ENCODE measurements at regions of chr12 and their contacts with region 1.

Region 1: DNA sequence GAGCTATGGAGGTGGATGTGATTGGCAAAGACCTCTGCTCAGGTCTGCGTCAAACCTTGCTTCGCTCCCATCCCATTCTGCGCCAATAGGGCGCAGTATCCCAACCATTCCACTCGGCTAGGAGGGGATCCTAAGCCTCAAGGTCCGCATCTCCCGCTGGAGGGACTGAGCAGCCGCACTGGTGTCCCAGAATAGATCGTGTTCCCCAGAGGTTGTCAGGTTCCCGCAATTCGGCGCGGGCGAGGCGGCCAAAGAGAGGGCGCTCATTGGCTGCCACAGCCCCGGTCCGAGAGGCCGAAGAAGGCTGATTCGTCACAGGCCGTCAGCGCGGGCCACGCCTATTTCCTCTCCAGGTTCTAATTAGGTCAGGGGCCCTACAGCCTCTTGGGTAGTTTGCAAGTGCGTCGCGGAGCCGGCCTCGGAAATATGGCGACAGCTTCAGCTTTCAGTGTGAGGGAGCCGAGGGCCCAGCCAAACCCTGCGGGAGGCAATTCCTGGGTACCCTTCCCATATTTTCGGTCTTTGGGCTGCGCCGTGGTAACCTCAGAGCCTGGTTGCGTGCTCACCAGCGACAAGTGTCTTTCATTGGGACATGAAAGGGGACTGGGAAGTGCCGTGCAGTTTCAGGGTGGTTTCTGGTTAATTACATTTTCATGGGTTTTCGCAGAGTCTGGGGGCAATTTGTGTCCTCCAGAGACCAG is 5.0 kb downstream of the OR10AD1 start:
- DNase-seq: peak; percentile 93 to 97 (median 96)
- H3K4me3 ChIP-seq: peak overlapping the region; percentile 81
- H3K27ac ChIP-seq: peak overlapping the region; percentile 94 to 98
- H3K4me1 ChIP-seq: peaks cover 6% of the 10 kb centered on the region
- H3K27me3 ChIP-seq: no peaks in the 10 kb centered on the region
- CTCF ChIP-seq: peak in 2 of 3 donors; percentile 6 to 27
- EP300 ChIP-seq: peak; percentile 47
- POLR2A ChIP-seq: peak; percentile 91

Region 2: DNA sequence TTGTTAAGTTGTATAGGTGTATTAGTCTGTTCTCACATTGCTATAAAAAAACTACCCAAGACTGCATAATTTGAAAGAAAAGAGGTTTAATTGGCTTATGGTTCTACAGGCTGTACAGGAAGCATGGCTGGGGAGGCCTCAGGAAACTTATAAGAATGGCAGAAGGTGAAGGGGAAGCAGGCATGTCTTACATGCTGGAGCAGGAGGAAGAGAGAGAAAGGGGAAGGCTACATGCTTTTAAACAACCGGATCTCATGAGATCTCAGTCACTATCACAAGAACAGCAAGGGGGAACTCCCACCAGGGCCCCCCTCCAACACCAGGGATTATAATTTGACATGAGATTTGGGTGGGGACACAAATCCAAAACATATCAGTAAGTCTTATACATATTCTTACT is 65.5 kb after region 1 on chr12:
- intact Hi-C with region 1: no loop called
- DNase-seq: no peak
- H3K4me3 ChIP-seq: no peak overlapping the region
- H3K27ac ChIP-seq: no peak overlapping the region
- H3K4me1 ChIP-seq: no peaks in the 10 kb centered on the region
- H3K27me3 ChIP-seq: no peaks in the 10 kb centered on the region
- CTCF ChIP-seq: no peak
- EP300 ChIP-seq: no peak
- POLR2A ChIP-seq: no peak

Region 3: GRCh38 chr12:48349471-48349870 is 151.3 kb after region 1 on chr12:
- intact Hi-C with region 1: loop called in 1 of 4 experiments (anchors 10 kb)
- DNase-seq: peak in 3 of 5 donors; percentile 31 to 67 (median 46)
- H3K4me3 ChIP-seq: peak overlapping the region; percentile 79
- H3K27ac ChIP-seq: peak overlapping the region in 1 of 2 donors; percentile 95
- H3K4me1 ChIP-seq: no peaks in the 10 kb centered on the region
- H3K27me3 ChIP-seq: no peaks in the 10 kb centered on the region
- CTCF ChIP-seq: no peak
- EP300 ChIP-seq: no peak
- POLR2A ChIP-seq: no peak

Region 4: DNA sequence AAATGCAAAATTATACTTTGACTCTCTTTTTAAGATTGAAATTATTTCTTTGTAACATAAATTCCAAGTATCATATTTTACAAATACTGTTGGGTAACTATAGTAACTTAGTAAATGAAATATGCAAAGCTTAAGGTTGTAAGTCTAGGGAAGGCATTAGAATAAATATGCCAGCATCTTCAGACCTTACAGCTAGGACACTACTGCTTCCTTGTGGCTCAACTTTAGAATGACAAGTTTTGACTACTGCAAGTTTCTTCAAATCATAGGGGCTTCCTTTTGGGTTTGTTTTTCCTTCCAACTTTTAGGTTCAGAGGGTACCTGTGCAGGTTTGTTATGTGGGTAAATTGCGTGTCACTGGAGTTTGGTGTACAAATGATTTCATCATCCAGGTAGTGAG is 256.5 kb after region 1 on chr12:
- intact Hi-C with region 1: loop called in 1 of 4 experiments (anchors 10 kb)
- DNase-seq: no peak
- H3K4me3 ChIP-seq: no peak overlapping the region
- H3K27ac ChIP-seq: no peak overlapping the region
- H3K4me1 ChIP-seq: no peaks in the 10 kb centered on the region
- H3K27me3 ChIP-seq: no peaks in the 10 kb centered on the region
- CTCF ChIP-seq: peak; percentile 18 to 50 (median 49)
- EP300 ChIP-seq: no peak
- POLR2A ChIP-seq: no peak

Region 5: GRCh38 chr12:48690990-48691389 is 492.9 kb after region 1 on chr12:
- intact Hi-C with region 1: no loop called
- DNase-seq: no peak
- H3K4me3 ChIP-seq: no peak overlapping the region
- H3K27ac ChIP-seq: no peak overlapping the region
- H3K4me1 ChIP-seq: no peaks in the 10 kb centered on the region
- H3K27me3 ChIP-seq: no peaks in the 10 kb centered on the region
- CTCF ChIP-seq: no peak
- EP300 ChIP-seq: no peak
- POLR2A ChIP-seq: no peak